Caco-2 (cell line): ENCODE measurements at regions of chr1 and their contacts with region 1.

Region 1: GRCh38 chr1:145782166-145783099 is 41.5 kb downstream of the RNF115 start:
- DNase-seq: peak in 1 of 2 experiments; percentile 21
- H3K4me3 ChIP-seq: no peak overlapping the region
- H3K4me3 Mint-ChIP-seq: peak overlapping the region; percentile 49
- H3K27ac Mint-ChIP-seq: peak overlapping the region; percentile 93
- H3K4me1 ChIP-seq: peaks cover 51% of the 10 kb centered on the region
- H3K4me1 Mint-ChIP-seq: peaks cover 41% of the 10 kb centered on the region
- H3K27me3 ChIP-seq: no peaks in the 10 kb centered on the region
- H3K27me3 Mint-ChIP-seq: no peaks in the 10 kb centered on the region
- CTCF ChIP-seq: no peak

Region 2: GRCh38 chr1:145823565-145824498 is 41.4 kb after region 1 on chr1 and contains the starts of genes POLR3C and RNF115:
- CTCF ChIA-PET with region 1: no interaction called
- POLR2A ChIA-PET with region 1: no interaction called
- intact Hi-C with region 1: loop called (anchors 5 kb)
- DNase-seq: peak; percentile 90 to 93
- H3K4me3 ChIP-seq: peak within 1 kb of the TSS; percentile 64
- H3K4me3 Mint-ChIP-seq: peak within 1 kb of the TSS; percentile 98
- H3K27ac Mint-ChIP-seq: peak within 1 kb of the TSS; percentile 97
- H3K4me1 ChIP-seq: no peaks in the 10 kb centered on the region
- H3K4me1 Mint-ChIP-seq: no peaks in the 10 kb centered on the region
- H3K27me3 ChIP-seq: no peaks in the 10 kb centered on the region
- H3K27me3 Mint-ChIP-seq: no peaks in the 10 kb centered on the region
- CTCF ChIP-seq: no peak
- total RNA-seq, gene POLR3C: 48.0 and 48.8 TPM in 2 replicates
- total RNA-seq, gene RNF115: 16.6 and 17.5 TPM in 2 replicates